ENCODE measurements at regions of chr20 and their contacts with region 1.

Region 1: DNA sequence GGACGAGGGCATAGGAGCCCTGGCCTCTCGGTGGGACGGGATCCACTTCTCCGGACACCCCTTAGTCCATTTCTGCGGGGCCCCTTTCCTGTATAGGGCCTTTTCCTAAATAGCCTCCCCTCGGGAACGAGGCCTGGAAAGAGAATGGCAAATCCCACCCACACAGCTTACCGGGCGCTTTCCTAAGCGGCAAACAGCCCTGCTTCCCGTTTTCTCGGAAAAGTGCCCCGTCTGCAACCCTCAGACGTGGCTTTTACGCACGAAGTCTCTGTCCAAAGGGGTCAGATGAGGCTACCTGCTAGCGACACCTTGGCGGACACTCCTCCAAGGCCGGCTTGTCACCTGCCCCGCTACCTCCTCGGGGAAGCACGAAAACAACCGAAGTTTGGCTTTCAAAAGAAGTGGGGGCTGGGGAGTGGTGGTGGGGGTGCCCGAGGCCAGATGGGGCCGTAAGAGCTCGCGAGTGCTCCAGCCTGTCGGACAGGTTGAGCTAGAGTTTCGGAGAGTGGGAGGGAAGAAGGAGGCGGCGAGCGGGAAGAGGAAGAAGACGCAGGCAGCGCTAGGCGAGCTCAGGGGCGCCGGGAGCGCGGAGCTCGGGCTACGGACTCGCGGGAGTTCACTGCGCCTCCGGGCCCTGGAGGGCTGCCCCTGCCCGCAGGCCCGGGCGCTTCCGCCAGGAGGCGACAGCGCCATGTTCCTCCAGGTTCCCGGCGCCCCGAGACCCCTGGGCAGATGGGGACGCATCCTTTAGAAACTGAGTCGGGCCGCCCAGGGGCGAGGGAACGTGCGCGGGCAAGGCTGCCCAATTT is 768 bp downstream of the TFAP2C start:
- DNase-seq: peak; percentile 95
- H3K4me3 ChIP-seq: peak overlapping the region; percentile 58 to 95 (median 64)
- H3K27ac ChIP-seq: peak overlapping the region; percentile 81
- H3K4me1 ChIP-seq: peaks cover 32% of the 10 kb centered on the region
- H3K27me3 ChIP-seq: peaks cover 2% of the 10 kb centered on the region
- CTCF ChIP-seq: peak; percentile 61 to 89

Region 2: GRCh38 chr20:56606174-56606884 is 23.5 kb before region 1 on chr20:
- CTCF ChIA-PET with region 1: no interaction called
- dilution Hi-C with region 1: no loop called
- in situ Hi-C with region 1: no loop called
- intact Hi-C with region 1: no loop called
- DNase-seq: peak; percentile 74
- H3K4me3 ChIP-seq: no peak overlapping the region
- H3K27ac ChIP-seq: peak overlapping the region; percentile 70
- H3K4me1 ChIP-seq: peaks cover 17% of the 10 kb centered on the region
- H3K27me3 ChIP-seq: no peaks in the 10 kb centered on the region
- CTCF ChIP-seq: no peak

Region 3: DNA sequence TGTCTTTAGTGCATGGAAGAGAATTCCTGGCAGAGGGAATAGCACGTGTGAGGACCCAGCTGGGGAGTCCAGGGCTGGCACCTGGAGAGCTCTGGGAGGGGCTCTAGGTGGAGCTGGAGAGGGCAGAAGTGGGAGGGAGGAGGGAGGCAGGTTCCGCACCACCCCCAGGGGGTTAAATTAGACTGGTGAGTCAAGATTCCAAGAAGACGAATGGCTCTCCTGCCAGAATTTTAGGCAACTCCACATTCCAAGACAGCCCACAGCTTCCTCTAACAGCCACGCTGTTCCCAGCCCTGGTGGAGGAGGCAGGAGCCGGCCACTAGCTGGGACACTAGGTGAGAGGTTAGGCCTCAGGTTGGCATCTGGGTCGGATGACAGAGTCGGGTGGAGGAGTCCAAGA is 59.4 kb after region 1 on chr20:
- CTCF ChIA-PET with region 1: interaction called, 3 read pairs
- dilution Hi-C with region 1: loop called (anchors 5 kb)
- in situ Hi-C with region 1: no loop called
- intact Hi-C with region 1: loop called (anchors 2 kb)
- DNase-seq: peak; percentile 67
- H3K4me3 ChIP-seq: no peak overlapping the region
- H3K27ac ChIP-seq: peak overlapping the region; percentile 45
- H3K4me1 ChIP-seq: peaks cover 33% of the 10 kb centered on the region
- H3K27me3 ChIP-seq: no peaks in the 10 kb centered on the region
- CTCF ChIP-seq: no peak

Region 4: DNA sequence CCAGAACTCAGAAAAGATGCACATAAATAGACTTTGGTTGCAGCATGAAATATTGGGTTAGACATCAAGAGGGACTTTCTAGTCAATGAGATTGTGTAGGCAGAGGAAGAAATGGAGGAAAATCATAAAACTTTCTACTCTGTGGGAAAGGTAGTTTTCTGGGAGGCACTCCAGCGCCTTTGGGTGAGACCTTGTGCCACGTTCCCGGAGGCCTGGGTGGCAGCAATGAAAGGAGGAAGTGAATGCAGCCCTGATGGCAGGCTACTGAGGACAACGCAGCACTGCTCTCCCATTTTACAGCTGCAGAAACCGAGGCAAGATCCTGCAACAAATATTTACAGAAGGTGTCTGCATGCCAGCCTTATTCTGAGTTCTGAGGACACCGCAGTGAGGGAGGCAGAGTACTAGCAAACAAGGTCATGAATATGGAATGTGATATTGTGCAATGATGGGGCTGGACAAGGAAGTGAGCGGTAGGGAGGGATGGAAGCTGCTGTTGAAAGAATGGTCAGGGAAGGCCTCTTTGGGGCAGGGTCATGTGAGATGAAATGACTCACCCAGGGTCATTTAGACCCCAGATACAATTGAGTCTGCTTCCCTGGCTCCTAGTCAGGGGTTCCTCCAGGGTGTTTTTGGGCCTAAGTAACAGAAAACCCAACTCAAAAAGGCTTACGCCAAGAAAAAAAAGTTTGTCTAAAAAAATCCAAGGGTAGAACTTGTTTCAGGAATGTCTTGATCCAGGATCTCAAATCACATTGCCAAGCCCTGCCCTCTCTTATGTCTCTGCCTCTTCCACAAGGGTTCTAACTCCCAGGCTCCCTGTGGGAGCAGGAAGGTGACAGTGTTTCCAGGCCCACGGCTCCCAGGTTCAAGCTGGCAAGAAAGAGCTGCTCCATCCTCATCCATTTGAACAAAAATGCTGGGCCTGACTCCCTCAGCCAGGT is 158.4 kb after region 1 on chr20:
- CTCF ChIA-PET with region 1: interaction called, 3 read pairs
- dilution Hi-C with region 1: no loop called
- in situ Hi-C with region 1: no loop called
- intact Hi-C with region 1: loop called (anchors 1 kb)
- DNase-seq: peak; percentile 85
- H3K4me3 ChIP-seq: no peak overlapping the region
- H3K27ac ChIP-seq: peak overlapping the region; percentile 99
- H3K4me1 ChIP-seq: peaks cover 18% of the 10 kb centered on the region
- H3K27me3 ChIP-seq: no peaks in the 10 kb centered on the region
- CTCF ChIP-seq: no peak

Region 5: GRCh38 chr20:56875046-56875551 is 245.2 kb after region 1 on chr20:
- CTCF ChIA-PET with region 1: no interaction called
- dilution Hi-C with region 1: no loop called
- in situ Hi-C with region 1: loop called in 1 of 2 experiments (anchors 10 kb)
- intact Hi-C with region 1: loop called (anchors 1 kb)
- DNase-seq: peak; percentile 91
- H3K4me3 ChIP-seq: no peak overlapping the region
- H3K27ac ChIP-seq: peak overlapping the region; percentile 12
- H3K4me1 ChIP-seq: peaks cover 7% of the 10 kb centered on the region
- H3K27me3 ChIP-seq: no peaks in the 10 kb centered on the region
- CTCF ChIP-seq: no peak

Region 6: DNA sequence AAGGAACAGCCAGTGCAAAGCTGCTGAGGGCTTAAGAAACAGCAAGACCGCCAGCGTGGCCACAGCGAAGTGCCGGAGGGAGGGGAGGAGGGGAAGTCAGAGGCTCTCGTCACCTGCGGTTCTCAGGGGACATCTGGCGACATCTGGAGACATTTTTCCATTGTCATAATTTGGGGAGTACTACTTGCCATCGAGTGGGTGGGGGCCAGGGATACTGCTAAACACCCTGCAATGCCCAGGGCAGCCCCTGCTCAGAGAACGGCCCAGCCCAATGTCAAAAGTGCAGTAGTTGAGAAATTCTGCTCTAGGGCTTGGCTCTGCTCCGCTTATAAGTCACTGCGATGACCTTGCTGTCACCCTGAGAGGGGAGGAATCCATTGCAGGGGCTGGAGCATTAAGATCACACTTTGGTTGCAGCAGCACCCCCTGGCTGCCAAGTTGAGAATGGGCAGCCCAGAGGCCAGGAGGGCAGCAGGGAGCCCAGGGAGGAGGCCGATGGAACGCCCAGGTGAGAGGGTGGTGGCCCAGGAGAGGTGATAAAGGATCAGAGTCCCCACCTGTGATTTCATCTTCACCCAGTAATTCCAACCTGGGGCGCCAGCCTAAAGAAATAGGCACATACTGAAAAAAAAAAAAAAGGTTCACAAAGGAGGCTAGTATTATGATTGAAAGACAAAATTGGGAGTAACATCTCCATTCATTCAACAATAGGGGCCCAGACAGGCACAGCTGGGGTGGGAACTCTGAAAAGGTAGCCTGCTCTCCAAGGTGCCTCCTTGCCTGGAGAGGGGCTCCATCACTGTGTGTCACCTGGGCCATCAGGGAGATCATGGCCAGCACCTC is 418.4 kb after region 1 on chr20:
- CTCF ChIA-PET with region 1: no interaction called
- dilution Hi-C with region 1: no loop called
- in situ Hi-C with region 1: no loop called
- intact Hi-C with region 1: loop called (anchors 2 kb)
- DNase-seq: peak; percentile 37
- H3K4me3 ChIP-seq: no peak overlapping the region
- H3K27ac ChIP-seq: no peak overlapping the region
- H3K4me1 ChIP-seq: peaks cover 19% of the 10 kb centered on the region
- H3K27me3 ChIP-seq: no peaks in the 10 kb centered on the region
- CTCF ChIP-seq: peak; percentile 76 to 78

Measured in mammary epithelial cell (primary cell).